Activated B cell treated with CpG ODN at 0.5 μM for 24 hours (primary cell): ENCODE measurements at regions of chr5 and their contacts with region 1.

Region 1: GRCh38 chr5:43313035-43313853 is at the start of gene HMGCS1:
- DNase-seq: peak; percentile 98
- ATAC-seq: peak; percentile 86
- H3K4me3 Mint-ChIP-seq: peak within 1 kb of the TSS; percentile 99
- H3K27ac Mint-ChIP-seq: peak within 1 kb of the TSS; percentile 95
- H3K4me1 Mint-ChIP-seq: peaks cover 55% of the 10 kb centered on the region
- H3K27me3 Mint-ChIP-seq: no peaks in the 10 kb centered on the region
- CTCF ChIP-seq: no peak
- total RNA-seq, gene HMGCS1: 133 and 160 TPM in 2 replicates

Region 2: DNA sequence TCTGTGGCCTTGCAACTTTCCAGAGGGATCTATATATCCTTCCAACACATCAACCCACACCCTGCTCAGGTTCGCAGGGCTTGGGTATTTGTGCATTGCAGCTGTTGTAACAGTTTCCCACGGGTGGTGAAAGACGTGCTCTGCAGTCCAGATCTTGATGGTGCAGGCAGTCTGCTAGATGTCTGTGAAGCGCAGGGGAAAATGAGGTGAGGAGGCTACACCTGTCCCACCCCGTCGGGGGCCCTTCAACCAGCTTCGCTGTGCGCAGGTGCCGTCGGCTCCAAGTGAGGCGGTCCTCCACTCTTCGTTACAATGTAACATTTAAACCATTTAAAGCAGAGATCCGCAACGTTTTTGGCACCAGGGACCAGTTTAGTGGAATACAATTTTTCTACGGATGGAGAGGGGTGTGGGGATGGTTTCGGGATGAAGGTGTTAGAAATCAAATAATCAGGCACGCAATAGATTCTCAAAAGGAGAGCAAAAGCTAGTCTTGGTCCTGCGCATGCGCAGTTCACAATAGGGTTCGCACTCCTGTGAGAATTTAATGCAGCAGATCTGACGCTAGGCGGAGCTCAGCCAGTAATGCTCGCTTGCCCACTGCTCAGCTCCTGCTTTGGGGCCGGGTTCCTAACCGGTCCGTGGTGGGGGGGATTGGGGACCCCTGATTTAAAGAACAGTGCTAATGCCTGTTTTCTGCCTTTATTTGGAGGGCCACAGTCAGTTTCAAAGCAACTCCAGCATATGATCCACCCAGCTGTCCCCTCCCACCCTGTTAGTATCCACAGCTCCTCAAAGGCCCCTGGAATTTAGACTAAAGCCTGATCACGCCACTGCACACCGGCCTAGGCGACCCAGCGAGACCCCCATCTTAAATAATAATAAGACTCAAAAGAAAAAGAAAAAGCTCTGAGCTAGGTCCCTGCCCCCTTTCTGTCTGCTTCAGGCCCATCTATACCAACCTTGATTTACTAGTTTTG is 404.4 kb before region 1 on chr5:
- CTCF ChIA-PET with region 1: no interaction called
- POLR2A ChIA-PET with region 1: interaction called, 3 read pairs
- intact Hi-C with region 1: loop called (anchors 2 kb)
- DNase-seq: peak; percentile 71
- ATAC-seq: peak; percentile 94
- H3K4me3 Mint-ChIP-seq: peak overlapping the region; percentile 93
- H3K27ac Mint-ChIP-seq: peak overlapping the region; percentile 84
- H3K4me1 Mint-ChIP-seq: peaks cover 12% of the 10 kb centered on the region
- H3K27me3 Mint-ChIP-seq: peaks cover 11% of the 10 kb centered on the region
- CTCF ChIP-seq: peak; percentile 50

Region 3: DNA sequence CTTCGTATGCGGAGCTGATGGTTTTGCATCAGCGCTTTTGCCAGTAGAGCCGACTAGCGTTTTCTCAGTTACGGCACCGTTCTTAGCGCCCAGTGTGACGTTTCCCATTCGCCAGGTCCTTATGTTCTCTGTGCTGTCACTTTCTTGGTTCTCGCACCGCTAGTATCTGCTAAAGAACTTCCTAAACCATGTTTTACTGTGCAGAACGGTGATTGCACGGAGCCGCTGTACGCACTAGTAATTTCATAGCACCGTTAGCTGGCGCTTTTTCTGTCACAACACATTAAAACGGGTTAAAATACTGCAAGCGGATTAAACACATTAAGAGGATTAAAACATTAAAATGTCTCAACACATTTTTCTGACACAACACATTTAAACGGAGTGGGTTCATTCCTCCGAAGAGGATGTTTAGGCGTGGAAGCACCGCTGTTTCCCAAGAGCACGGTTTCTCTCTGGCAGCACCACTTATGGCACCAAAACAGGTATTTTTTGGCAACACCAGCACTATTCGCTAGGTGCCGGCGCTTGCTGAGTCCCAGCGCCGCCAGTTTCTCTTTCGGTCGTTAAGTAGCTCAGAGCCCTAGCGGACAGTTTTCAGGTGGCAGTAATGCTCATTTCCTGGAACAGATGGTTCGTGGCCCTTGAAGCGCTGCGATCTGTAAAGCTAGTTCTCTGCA is 293.5 kb before region 1 on chr5:
- CTCF ChIA-PET with region 1: no interaction called
- POLR2A ChIA-PET with region 1: interaction called, 16 read pairs
- intact Hi-C with region 1: loop called (anchors 1 kb)
- DNase-seq: peak; percentile 61
- ATAC-seq: peak; percentile 64
- H3K4me3 Mint-ChIP-seq: peak overlapping the region; percentile 97
- H3K27ac Mint-ChIP-seq: peak overlapping the region; percentile 100
- H3K4me1 Mint-ChIP-seq: peaks cover 39% of the 10 kb centered on the region
- H3K27me3 Mint-ChIP-seq: no peaks in the 10 kb centered on the region
- CTCF ChIP-seq: no peak

Region 4: DNA sequence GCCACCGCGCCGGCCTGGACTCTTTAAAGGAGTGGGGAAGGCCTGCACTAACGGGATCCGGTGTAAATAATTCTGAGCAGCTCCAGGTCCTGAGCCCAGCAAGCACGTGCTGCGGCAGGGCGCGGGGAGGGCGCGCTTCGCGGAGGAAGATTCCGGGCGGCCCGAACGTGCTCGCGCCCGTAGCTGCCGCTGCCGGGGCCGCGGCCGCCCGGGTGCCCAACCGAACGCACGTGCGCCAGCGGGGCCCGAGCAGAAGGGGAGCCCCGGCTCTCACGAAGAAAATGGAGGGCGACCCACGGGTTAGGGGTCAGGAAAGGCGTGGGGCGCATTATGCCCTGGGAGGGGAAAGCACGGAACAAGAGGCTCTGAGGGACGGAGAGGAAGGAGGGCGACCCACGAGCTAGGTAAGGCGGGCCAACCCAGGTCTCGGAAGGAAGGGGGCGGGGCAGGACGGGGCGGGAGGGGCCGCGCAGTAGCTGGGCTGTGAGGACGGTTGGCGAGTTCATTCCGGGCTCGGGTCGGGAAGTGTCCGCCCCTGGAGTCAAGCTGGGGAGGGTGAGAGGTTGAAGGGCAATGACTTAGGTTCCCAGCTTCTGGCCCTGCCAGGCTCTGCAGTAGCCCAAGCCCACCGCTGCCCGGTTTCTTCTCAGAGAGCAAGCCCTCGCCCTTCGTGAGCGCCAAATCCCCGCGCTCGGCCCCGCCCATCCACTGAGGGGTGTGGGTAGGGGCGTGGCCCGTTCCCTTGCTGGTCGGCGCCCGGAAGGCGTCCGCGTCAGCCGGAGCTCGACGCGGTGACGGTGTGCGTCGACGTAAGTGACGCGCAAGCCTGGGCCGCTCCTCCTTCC is 192.3 kb before region 1 on chr5 and contains the start of gene ZNF131:
- CTCF ChIA-PET with region 1: no interaction called
- POLR2A ChIA-PET with region 1: interaction called, 73 read pairs
- intact Hi-C with region 1: loop called (anchors 1 kb)
- DNase-seq: peak; percentile 99
- ATAC-seq: peak; percentile 86
- H3K4me3 Mint-ChIP-seq: peak within 1 kb of the TSS; percentile 90
- H3K27ac Mint-ChIP-seq: peak within 1 kb of the TSS; percentile 94
- H3K4me1 Mint-ChIP-seq: peaks cover 38% of the 10 kb centered on the region
- H3K27me3 Mint-ChIP-seq: no peaks in the 10 kb centered on the region
- CTCF ChIP-seq: no peak
- total RNA-seq, gene ZNF131: 50.8 and 57.6 TPM in 2 replicates

Region 5: DNA sequence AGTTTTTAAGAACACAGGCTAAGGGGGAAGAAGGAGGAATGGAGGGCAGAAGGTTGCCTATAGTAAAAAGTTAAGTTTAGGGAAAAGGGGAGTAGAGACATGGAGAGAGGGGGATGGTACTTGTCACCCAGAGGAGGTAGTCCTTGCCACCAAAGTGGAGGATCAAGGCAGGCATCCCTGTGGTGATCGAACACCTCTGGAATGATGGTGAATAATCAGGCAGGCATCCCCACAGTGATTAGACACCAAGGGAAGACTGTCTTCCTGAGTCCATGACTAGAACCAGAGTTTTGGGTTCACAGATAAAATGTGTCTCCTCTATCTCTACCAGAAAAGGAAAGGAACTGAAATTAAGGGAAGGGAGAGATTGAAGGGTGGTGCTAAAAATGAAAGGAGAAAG is 19.2 kb after region 1 on chr5:
- CTCF ChIA-PET with region 1: no interaction called
- POLR2A ChIA-PET with region 1: no interaction called
- intact Hi-C with region 1: no loop called
- DNase-seq: no peak
- ATAC-seq: no peak
- H3K4me3 Mint-ChIP-seq: no peak overlapping the region
- H3K27ac Mint-ChIP-seq: no peak overlapping the region
- H3K4me1 Mint-ChIP-seq: no peaks in the 10 kb centered on the region
- H3K27me3 Mint-ChIP-seq: peaks cover 23% of the 10 kb centered on the region
- CTCF ChIP-seq: no peak

Region 6: GRCh38 chr5:43396762-43397304 is 83.6 kb after region 1 on chr5:
- CTCF ChIA-PET with region 1: no interaction called
- POLR2A ChIA-PET with region 1: interaction called, 19 read pairs
- intact Hi-C with region 1: loop called (anchors 1 kb)
- DNase-seq: peak; percentile 67
- ATAC-seq: peak; percentile 100
- H3K4me3 Mint-ChIP-seq: peak overlapping the region; percentile 99
- H3K27ac Mint-ChIP-seq: peak overlapping the region; percentile 96
- H3K4me1 Mint-ChIP-seq: peaks cover 20% of the 10 kb centered on the region
- H3K27me3 Mint-ChIP-seq: no peaks in the 10 kb centered on the region
- CTCF ChIP-seq: no peak